Activated T-helper 1 cell treated with anti-CD3 and anti-CD28 coated beads, Interleukin-12 subunit alpha, Interleukin-12 subunit beta, Interleukin-2, Interleukin-4 antibody, amounts not matched to agents 30 ng/mL and 10 ng/mL and 1 ng/mL, durations not matched to agents 14 hours and 24 hours and 36 hours (primary cell): ENCODE measurements at regions of chr12 and their contacts with region 1.

Region 1: DNA sequence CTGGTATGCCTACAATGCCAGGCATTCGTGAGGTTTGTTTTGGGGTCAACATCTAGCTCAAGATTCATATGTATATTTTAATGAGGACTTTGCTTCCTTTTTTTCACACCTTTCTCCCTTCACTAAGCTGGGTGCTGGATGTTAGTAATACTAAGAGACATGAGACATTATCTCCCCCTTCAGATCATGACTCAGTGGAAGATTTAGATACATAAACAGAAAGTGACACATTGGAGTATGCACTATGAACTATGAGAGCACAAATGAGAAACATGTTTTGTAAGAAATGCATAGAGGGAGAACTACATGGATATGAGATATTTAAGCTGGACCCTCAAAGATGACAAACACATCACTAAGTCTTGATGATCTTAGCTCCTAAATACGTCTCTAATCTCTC is 286.3 kb downstream of the RPAP3 start:
- DNase-seq: no peak
- H3K4me3 Mint-ChIP-seq: no peak overlapping the region
- H3K27ac Mint-ChIP-seq: peak overlapping the region; percentile 28
- H3K4me1 Mint-ChIP-seq: peaks cover 25% of the 10 kb centered on the region
- H3K27me3 Mint-ChIP-seq: no peaks in the 10 kb centered on the region

Region 2: GRCh38 chr12:47574252-47575021 is 154.9 kb after region 1 on chr12:
- intact Hi-C with region 1: loop called (anchors 1 kb)
- DNase-seq: no peak
- H3K4me3 Mint-ChIP-seq: no peak overlapping the region
- H3K27ac Mint-ChIP-seq: peak overlapping the region; percentile 78
- H3K4me1 Mint-ChIP-seq: peaks cover 30% of the 10 kb centered on the region
- H3K27me3 Mint-ChIP-seq: no peaks in the 10 kb centered on the region

Region 3: GRCh38 chr12:47686645-47687240 is 267.2 kb after region 1 on chr12:
- intact Hi-C with region 1: loop called (anchors 5 kb)
- DNase-seq: no peak
- H3K4me3 Mint-ChIP-seq: no peak overlapping the region
- H3K27ac Mint-ChIP-seq: no peak overlapping the region
- H3K4me1 Mint-ChIP-seq: peaks cover 7% of the 10 kb centered on the region
- H3K27me3 Mint-ChIP-seq: no peaks in the 10 kb centered on the region